HCT116 (cell line): ENCODE measurements at regions of chr21 and their contacts with region 1.

Region 1: DNA sequence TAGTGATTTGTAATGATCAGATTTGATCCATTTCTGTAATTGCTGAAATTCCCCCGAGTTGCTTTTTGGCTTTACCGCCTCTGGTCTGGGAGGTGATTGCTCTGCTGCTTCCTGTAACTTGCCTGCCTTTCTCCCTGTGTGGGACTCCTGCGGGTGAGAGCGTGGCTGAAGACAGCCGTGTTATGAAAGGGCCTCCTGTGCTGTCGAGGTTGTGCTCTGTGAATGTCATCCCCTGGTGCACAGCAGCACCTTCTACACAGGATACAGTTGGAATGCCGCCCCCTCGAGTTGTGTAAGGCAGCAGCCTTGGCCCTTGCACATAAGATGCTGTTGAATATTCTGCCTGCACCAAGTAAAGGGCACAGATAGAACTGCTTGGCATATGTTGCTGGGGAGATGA is 5.9 kb downstream of the SOD1 start:
- DNase-seq: no peak
- ATAC-seq: no peak
- H3K4me3 ChIP-seq: no peak overlapping the region
- H3K27ac ChIP-seq: no peak overlapping the region
- H3K4me1 ChIP-seq: peaks cover 5 to 24% of the 10 kb centered on the region in 2 experiments; a peak in 3 of 4 replicates
- H3K27me3 ChIP-seq: no peaks in the 10 kb centered on the region
- CTCF ChIP-seq: no peak
- POLR2A ChIP-seq: no peak
- RAD21 ChIP-seq: no peak

Region 2: GRCh38 chr21:31731802-31732596 is 66.6 kb after region 1 on chr21 and contains the start of gene SCAF4:
- CTCF ChIA-PET with region 1: no interaction called
- POLR2A ChIA-PET with region 1: no interaction called
- RAD21 ChIA-PET with region 1: no interaction called
- intact Hi-C with region 1: loop called (anchors 2 kb)
- DNase-seq: peak; percentile 56
- ATAC-seq: peak; percentile 91
- H3K4me3 ChIP-seq: peak within 1 kb of the TSS; percentile 60 to 77
- H3K27ac ChIP-seq: peak within 1 kb of the TSS; percentile 88
- H3K4me1 ChIP-seq: peaks cover 15 to 31% of the 10 kb centered on the region in 2 experiments
- H3K27me3 ChIP-seq: no peaks in the 10 kb centered on the region
- CTCF ChIP-seq: no peak
- POLR2A ChIP-seq: peak; percentile 92
- RAD21 ChIP-seq: no peak
- total RNA-seq, gene SCAF4: 31.1 TPM

Region 3: GRCh38 chr21:32757804-32758203 is 1092.4 kb after region 1 on chr21:
- CTCF ChIA-PET with region 1: no interaction called
- POLR2A ChIA-PET with region 1: no interaction called
- RAD21 ChIA-PET with region 1: no interaction called
- intact Hi-C with region 1: no loop called
- DNase-seq: no peak
- ATAC-seq: no peak
- H3K4me3 ChIP-seq: no peak overlapping the region
- H3K27ac ChIP-seq: no peak overlapping the region
- H3K4me1 ChIP-seq: peaks cover 0 to 4% of the 10 kb centered on the region in 2 experiments; a peak in 2 of 4 replicates
- H3K27me3 ChIP-seq: no peaks in the 10 kb centered on the region
- CTCF ChIP-seq: no peak
- POLR2A ChIP-seq: no peak
- RAD21 ChIP-seq: no peak